Pancreas (tissue), 10 donors: ENCODE measurements at regions of chr17 and their contacts with region 1.

Region 1: GRCh38 chr17:77331301-77331864 is 190.6 kb downstream of the SEC14L1 start:
- DNase-seq: peak; percentile 75 to 99 (median 90)
- ATAC-seq: peak; percentile 82 to 97 (median 92)
- H3K4me3 ChIP-seq: no peak overlapping the region
- H3K27ac ChIP-seq: peak overlapping the region in 1 of 4 donors; percentile 2
- H3K4me1 ChIP-seq: no peaks in the 10 kb centered on the region
- H3K27me3 ChIP-seq: no peaks in the 10 kb centered on the region
- CTCF ChIP-seq: peak; percentile 88 to 93 (median 90)

Region 2: DNA sequence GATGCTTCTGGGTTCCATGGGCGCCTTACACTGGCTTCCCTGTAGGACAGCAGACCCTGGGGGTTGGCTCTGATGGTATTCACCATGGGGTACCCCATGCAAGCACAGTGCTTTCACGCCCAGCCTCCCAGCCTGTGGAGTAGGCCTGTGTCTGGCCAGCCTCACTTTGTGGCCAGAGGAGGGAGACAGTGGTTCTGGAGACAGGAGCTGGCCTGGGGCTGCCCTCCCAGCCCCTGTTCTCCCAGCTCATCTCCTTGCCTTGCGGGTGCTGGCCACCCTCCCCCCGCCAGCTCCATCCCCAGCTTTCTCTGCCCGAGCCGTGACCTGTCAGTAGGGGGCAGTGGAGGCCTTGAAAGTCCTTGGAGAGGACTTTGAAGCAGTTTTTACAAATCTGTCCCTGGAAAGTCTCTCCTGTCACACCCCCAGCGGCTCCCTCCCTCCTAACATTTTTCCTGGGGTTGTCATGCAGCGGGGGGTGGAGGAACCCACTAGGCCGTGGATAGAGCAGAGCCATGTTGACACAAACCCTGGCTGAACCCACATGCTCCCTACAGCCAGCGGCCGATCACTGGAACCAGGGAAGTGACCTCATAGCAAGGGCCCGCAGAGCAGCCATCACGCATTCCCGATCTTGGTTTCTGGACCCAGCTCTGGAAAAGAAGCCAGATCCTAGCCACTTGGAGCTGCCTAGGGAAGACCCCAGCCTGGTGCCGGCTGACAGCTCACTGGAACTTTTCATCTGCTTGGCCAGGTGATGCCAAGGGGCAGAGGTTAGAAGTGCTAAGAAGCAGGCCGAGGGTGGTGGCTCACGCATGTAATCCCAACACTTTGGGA is 98.8 kb after region 1 on chr17:
- intact Hi-C with region 1: loop called in 1 of 3 experiments (anchors 5 kb)
- DNase-seq: peak; percentile 74 to 84 (median 80)
- ATAC-seq: peak; percentile 65 to 81 (median 70)
- H3K4me3 ChIP-seq: no peak overlapping the region
- H3K27ac ChIP-seq: peak overlapping the region; percentile 42 to 73 (median 58)
- H3K4me1 ChIP-seq: peaks cover 0 to 29% (median 4%) of the 10 kb centered on the region in 3 donors
- H3K27me3 ChIP-seq: no peaks in the 10 kb centered on the region
- CTCF ChIP-seq: peak; percentile 35 to 67 (median 49)

Region 3: GRCh38 chr17:77590951-77591735 is 259.8 kb after region 1 on chr17:
- intact Hi-C with region 1: no loop called
- DNase-seq: peak in 1 of 6 donors; percentile 16
- ATAC-seq: no peak
- H3K4me3 ChIP-seq: no peak overlapping the region
- H3K27ac ChIP-seq: no peak overlapping the region
- H3K4me1 ChIP-seq: no peaks in the 10 kb centered on the region
- H3K27me3 ChIP-seq: peaks cover 0 to 3% (median 0%) of the 10 kb centered on the region in 4 donors
- CTCF ChIP-seq: no peak